ENCODE measurements at regions of chr6 and their contacts with region 1.

Region 1: GRCh38 chr6:101000341-101000740 is 119.2 kb upstream of the ASCC3 start:
- DNase-seq: peak; percentile 27
- H3K4me3 ChIP-seq: no peak overlapping the region
- H3K27ac ChIP-seq: peak overlapping the region; percentile 36
- H3K4me1 ChIP-seq: peaks cover 28% of the 10 kb centered on the region
- CTCF ChIP-seq: no peak

Region 2: GRCh38 chr6:100913400-100914286 is 86.7 kb before region 1 on chr6:
- CTCF ChIA-PET with region 1: no interaction called
- POLR2A ChIA-PET with region 1: no interaction called
- intact Hi-C with region 1: no loop called
- DNase-seq: no peak
- H3K4me3 ChIP-seq: no peak overlapping the region
- H3K27ac ChIP-seq: no peak overlapping the region
- H3K4me1 ChIP-seq: no peaks in the 10 kb centered on the region
- CTCF ChIP-seq: no peak

Region 3: DNA sequence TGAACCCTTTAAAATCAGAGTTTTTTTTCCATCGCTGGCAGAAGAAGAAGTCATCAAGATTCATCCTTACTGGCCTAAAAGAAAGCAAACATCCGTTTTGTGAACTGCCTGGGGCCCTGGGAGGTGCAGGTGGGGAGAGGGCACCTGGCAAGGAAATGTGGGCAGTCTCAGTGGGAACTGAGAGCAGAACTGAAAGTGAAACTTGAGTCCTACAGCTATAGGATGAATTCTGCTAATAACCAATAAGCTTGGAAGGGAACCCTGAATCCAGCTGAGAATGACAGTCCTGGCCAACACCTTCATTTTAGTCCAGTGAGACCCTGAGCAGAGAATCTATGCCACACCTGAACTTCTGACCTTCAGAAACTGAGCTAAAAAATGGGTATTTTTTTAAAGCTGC is 10.8 kb after region 1 on chr6:
- CTCF ChIA-PET with region 1: interaction called, 7 read pairs
- POLR2A ChIA-PET with region 1: interaction called, 25 read pairs
- intact Hi-C with region 1: no loop called
- DNase-seq: peak; percentile 90
- H3K4me3 ChIP-seq: peak overlapping the region; percentile 44
- H3K27ac ChIP-seq: peak overlapping the region; percentile 90
- H3K4me1 ChIP-seq: peaks cover 51% of the 10 kb centered on the region
- CTCF ChIP-seq: no peak

Region 4: DNA sequence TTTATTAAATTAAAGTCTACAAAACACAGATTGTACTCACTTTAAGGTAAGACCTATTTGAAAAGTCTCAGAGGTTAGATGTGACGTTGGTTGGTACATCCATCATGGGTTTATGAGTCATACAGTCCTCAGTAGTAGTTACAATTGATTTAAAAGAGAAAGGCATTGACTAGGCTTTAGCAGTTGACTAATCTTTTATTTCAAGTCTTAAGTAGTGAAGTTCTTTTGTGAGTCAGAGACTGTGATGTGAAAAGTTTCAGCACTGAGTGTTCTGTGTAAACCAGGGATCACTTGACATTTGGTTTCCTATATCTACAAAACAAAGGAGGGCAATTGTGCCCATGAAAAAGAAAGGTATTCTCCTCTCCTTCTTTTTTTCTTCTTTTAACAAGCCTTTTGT is 614.4 kb after region 1 on chr6:
- CTCF ChIA-PET with region 1: no interaction called
- POLR2A ChIA-PET with region 1: no interaction called
- intact Hi-C with region 1: no loop called
- DNase-seq: no peak
- H3K4me3 ChIP-seq: no peak overlapping the region
- H3K27ac ChIP-seq: no peak overlapping the region
- H3K4me1 ChIP-seq: no peaks in the 10 kb centered on the region
- CTCF ChIP-seq: no peak

Measured in OCI-LY7 (cell line).